ENCODE measurements at regions of chr11 and their contacts with region 1.

Region 1: GRCh38 chr11:66344550-66345315 is at the start of gene BRMS1:
- DNase-seq: peak; percentile 86 to 98
- H3K4me3 ChIP-seq: peak within 1 kb of the TSS; percentile 75 to 100 (median 92)
- H3K27ac ChIP-seq: peak within 1 kb of the TSS; percentile 61; the same call in 1 of the 2 replicates
- H3K4me1 ChIP-seq: peaks cover 0 to 15% (median 9%) of the 10 kb centered on the region in 4 experiments; a peak in 6 of 7 replicates
- H3K27me3 ChIP-seq: peaks cover 0 to 2% (median 0%) of the 10 kb centered on the region in 4 experiments; a peak in 3 of 7 replicates
- CTCF ChIP-seq: no peak
- EP300 ChIP-seq: no peak
- POLR2A ChIP-seq: peak in 1 of 2 experiments; percentile 96; a peak in 2 of 3 replicates
- RAD21 ChIP-seq: no peak
- total RNA-seq, gene BRMS1: 44.8 and 46.1 TPM in 2 replicates

Region 2: DNA sequence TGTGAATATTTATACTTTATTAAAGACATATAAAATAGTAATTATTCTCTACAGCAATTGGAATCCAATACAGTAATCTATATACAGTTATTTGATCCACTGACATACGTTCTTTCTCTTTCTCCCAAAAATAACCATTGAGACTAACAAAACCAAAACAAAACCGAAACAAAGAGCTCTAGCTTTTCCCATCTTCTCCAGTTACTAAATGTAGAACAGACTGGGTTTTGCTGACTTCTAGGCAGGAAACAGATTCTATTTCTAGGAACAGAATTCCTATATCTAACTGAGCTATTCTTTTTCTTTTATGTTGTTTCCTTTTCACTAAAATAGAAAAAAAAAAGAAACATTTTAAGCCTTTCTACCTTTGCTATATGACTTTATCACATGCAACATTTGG is 194.6 kb before region 1 on chr11:
- CTCF ChIA-PET with region 1: no interaction called
- POLR2A ChIA-PET with region 1: no interaction called
- DNase-seq: no peak
- H3K4me3 ChIP-seq: no peak overlapping the region
- H3K27ac ChIP-seq: no peak overlapping the region
- H3K4me1 ChIP-seq: no peaks in the 10 kb centered on the region
- H3K27me3 ChIP-seq: no peaks in the 10 kb centered on the region
- CTCF ChIP-seq: no peak
- EP300 ChIP-seq: no peak
- POLR2A ChIP-seq: no peak
- RAD21 ChIP-seq: no peak

Region 3: DNA sequence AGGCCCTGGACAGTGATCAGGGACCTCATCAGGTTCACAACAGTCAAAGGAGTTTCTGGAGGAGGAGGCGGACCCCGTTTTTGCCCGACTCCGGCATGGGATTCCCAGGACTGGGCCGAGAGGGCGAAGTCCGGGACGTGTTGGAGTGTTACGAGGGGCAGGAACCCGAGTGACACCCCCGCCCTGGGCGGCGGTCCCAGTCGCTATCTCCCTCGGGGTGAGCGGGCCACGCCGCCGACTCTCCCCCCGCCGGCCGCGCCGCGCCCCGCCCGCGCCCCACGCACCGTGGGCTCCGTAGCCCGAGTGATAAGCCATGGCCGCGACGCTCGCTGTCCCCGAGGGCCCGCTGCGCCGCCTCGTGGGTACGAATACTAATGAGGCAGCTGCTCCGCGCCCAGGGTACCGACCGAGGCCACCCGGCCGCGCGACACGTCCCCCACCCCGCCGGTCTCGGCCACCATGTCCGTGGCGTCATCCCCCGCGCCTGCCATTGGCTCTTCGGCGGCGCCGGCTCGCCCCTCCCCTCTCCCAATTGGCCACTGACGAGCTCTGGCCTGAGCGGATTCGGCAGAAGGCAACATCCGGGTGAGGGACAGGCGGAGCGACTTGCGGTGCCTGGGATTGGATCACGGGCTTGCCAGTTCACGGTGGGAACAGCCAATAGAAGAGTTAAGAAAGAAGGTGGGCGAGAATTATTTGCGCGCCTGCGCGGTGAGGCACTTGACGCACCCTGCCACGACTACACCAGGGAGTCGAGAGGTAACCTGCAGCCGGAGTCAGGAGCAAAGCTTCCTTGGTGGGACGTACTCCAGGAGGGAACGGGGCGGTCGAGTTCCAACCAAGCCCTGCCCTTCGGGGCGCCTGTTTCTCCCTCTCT is 55.8 kb before region 1 on chr11 and contains the start of gene YIF1A:
- CTCF ChIA-PET with region 1: interaction called, 5 read pairs
- POLR2A ChIA-PET with region 1: interaction called, 20 read pairs
- DNase-seq: peak; percentile 95 to 98
- H3K4me3 ChIP-seq: peak within 1 kb of the TSS; percentile 76 to 94 (median 92)
- H3K27ac ChIP-seq: peak within 1 kb of the TSS; percentile 55
- H3K4me1 ChIP-seq: peaks cover 0 to 21% (median 6%) of the 10 kb centered on the region in 4 experiments; a peak in 5 of 7 replicates
- H3K27me3 ChIP-seq: peaks cover 2 to 27% (median 18%) of the 10 kb centered on the region in 4 experiments
- CTCF ChIP-seq: no peak
- EP300 ChIP-seq: no peak
- POLR2A ChIP-seq: peak in 1 of 2 experiments; percentile 72; a peak in 2 of 3 replicates
- RAD21 ChIP-seq: no peak
- total RNA-seq, gene YIF1A: 70.1 and 75.9 TPM in 2 replicates

Region 4: DNA sequence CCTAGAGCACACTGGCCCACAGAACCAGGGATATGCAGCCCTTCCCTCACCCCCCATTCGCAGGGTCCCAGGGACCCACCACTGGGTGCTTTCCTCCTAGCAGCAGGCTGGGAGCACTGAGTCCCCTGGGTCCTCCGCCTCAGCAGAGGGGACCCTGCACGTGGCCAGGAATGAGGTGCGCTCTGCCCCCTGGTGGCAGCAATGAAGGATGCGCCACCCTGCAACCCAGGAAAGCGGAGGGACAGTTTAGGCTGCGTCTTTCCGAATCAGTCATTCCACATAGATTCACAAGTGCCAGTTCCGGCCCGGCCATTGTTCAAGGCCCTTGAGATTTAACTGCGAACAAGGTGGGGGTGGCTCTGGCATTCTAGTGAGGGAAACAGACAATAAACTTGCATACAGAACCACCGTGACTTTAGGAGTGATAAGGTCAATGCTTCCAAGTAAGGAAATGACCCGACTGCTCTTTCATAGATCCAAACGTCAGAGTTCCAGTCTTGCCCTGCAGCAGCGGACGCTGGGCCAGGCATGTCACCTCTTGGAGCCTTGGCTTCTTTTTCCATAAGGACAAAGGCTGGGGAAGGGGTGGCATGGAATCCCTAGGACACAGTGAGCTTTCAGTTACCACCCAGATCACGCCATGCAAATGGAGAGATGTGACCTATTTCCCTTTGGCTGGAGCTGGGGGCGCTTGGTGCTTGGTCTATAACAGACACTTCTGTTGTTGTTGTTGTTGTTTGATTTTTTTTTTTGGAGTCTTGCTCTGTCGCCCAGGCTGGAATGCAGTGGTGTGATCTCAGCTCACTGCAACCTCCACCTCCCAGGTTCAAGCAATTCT is 16.2 kb before region 1 on chr11:
- CTCF ChIA-PET with region 1: interaction called, 10 read pairs
- POLR2A ChIA-PET with region 1: interaction called, 61 read pairs
- DNase-seq: peak; percentile 76 to 94
- H3K4me3 ChIP-seq: peak overlapping the region in 3 of 4 experiments; percentile 4 to 38 (median 11); a peak in 3 of 8 replicates
- H3K27ac ChIP-seq: no peak overlapping the region
- H3K4me1 ChIP-seq: peaks cover 5 to 13% (median 8%) of the 10 kb centered on the region in 4 experiments; a peak in 6 of 7 replicates
- H3K27me3 ChIP-seq: peaks cover 0 to 7% (median 5%) of the 10 kb centered on the region in 4 experiments; a peak in 2 of 7 replicates
- CTCF ChIP-seq: peak; percentile 95 to 98 (median 97)
- EP300 ChIP-seq: no peak
- POLR2A ChIP-seq: no peak; a peak in 1 of 3 replicates
- RAD21 ChIP-seq: peak; percentile 73 to 82

Region 5: GRCh38 chr11:66363805-66364535 is 19.2 kb after region 1 on chr11:
- CTCF ChIA-PET with region 1: interaction called, 20 read pairs
- POLR2A ChIA-PET with region 1: interaction called, 487 read pairs
- DNase-seq: peak; percentile 77 to 99
- H3K4me3 ChIP-seq: no peak overlapping the region
- H3K27ac ChIP-seq: no peak overlapping the region
- H3K4me1 ChIP-seq: peaks cover 0 to 3% (median 0%) of the 10 kb centered on the region in 4 experiments; a peak in 2 of 7 replicates
- H3K27me3 ChIP-seq: no peaks in the 10 kb centered on the region
- CTCF ChIP-seq: peak; percentile 81 to 98 (median 88)
- EP300 ChIP-seq: no peak; a peak in 1 of 3 replicates
- POLR2A ChIP-seq: no peak; a peak in 1 of 3 replicates
- RAD21 ChIP-seq: peak; percentile 32 to 52; a peak in 3 of 4 replicates

Region 6: DNA sequence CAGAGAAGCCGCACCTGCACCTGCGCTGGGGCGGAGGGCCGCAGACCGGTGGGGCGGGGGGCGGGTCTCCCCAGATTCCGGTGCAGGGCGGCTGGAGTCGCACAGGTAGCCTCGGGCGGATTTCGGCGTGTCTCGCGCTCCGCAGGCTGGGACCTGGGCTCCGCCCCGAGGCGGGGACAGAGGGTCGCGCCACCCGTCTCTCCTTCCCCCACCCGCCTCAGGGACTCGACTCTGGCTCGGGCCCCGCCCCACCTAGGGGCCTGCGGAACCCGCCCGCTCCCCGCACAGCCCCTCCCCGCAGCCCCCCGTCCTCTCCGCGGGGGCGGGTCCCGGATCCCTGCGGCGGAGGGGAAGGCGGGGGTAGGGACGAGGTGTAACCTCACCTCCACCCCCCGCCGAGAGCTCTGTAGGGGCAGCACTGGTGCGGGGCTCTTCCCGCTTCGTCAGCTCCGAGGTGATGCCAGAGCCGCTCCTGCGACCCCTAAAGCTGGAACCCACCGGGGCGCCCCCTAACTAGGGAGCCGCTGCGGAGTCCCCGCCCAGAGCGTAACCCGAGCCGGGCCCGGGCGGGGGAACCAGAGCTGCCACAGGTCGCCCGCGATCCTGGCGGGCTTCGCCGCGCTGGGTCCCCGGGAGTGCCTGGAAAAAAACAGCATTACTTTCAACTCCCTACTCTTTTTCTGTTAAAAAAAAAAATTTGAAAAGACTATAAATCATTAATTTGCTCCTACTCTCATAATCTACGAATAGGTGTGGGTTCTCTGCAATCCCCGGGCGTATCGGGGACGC is 27.1 kb after region 1 on chr11 and contains the start of gene SLC29A2:
- CTCF ChIA-PET with region 1: interaction called, 18 read pairs
- POLR2A ChIA-PET with region 1: interaction called, 487 read pairs
- DNase-seq: peak; percentile 92 to 94
- H3K4me3 ChIP-seq: peak within 1 kb of the TSS; percentile 77 to 93 (median 82)
- H3K27ac ChIP-seq: peak within 1 kb of the TSS; percentile 86
- H3K4me1 ChIP-seq: peaks cover 0 to 8% (median 7%) of the 10 kb centered on the region in 4 experiments; a peak in 6 of 7 replicates
- H3K27me3 ChIP-seq: no peaks in the 10 kb centered on the region
- CTCF ChIP-seq: no peak
- EP300 ChIP-seq: no peak
- POLR2A ChIP-seq: 0 out of 3 replicates have a peak, but pooled peaks of 1 of the 2 experiments have one; percentile 33
- RAD21 ChIP-seq: no peak
- total RNA-seq, gene SLC29A2: 29.3 and 32.4 TPM in 2 replicates

Measured in H1 (cell line).